Cardiac septum (tissue), 1 donor: ENCODE measurements at regions of chr15 and their contacts with region 1.

Region 1: GRCh38 chr15:35444557-35445204 is 101.3 kb downstream of the DPH6 start:
- DNase-seq: no peak

Region 2: DNA sequence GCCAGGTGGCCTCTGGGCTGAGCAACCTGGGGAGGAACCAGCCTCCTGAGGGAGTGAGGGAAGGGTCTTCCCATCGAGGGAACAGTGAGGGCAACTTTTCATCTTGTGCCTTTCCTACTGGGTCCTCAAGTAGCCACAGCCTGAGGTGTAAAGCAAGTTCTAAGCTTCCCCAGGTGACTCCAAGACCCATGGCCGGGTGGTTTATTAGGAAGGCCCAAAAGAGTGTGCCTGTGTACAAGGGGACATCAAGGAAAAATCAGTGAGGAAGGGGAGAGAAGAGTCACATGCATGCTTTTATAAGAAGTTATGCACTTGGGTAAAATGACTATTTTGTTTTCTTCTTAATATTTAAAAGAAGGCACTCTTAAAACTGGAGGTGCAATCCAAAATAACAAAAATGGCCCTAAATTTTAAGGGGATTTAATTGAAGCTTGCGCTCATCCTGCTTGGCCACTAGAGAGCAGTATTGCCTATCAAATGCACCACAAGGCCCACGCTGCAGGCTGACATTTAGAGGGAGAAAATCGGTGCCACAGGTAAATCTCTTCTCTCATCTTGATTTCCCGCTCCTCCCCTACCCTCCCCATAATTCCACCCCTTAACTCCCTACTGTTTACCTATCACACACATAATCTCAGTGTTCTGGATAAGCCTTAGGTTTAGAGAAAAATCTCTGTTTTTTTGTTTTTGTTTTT is 366.3 kb before region 1 on chr15:
- intact Hi-C with region 1: loop called (anchors 5 kb)
- DNase-seq: peak; percentile 76

Region 3: GRCh38 chr15:35289024-35289617 is 155.6 kb before region 1 on chr15:
- intact Hi-C with region 1: loop called (anchors 1 kb)
- DNase-seq: no peak